ENCODE measurements at regions of chr19 and their contacts with region 1.

Region 1: GRCh38 chr19:6048808-6049405 is 61.4 kb downstream of the RFX2 start:
- DNase-seq: peak; percentile 77 to 87 (median 82)
- H3K4me3 ChIP-seq: peak overlapping the region in 1 of 7 experiments; percentile 39
- H3K27ac ChIP-seq: no peak overlapping the region
- H3K4me1 ChIP-seq: peaks cover 0 to 11% (median 10%) of the 10 kb centered on the region in 4 experiments
- H3K27me3 ChIP-seq: no peaks in the 10 kb centered on the region

Region 2: DNA sequence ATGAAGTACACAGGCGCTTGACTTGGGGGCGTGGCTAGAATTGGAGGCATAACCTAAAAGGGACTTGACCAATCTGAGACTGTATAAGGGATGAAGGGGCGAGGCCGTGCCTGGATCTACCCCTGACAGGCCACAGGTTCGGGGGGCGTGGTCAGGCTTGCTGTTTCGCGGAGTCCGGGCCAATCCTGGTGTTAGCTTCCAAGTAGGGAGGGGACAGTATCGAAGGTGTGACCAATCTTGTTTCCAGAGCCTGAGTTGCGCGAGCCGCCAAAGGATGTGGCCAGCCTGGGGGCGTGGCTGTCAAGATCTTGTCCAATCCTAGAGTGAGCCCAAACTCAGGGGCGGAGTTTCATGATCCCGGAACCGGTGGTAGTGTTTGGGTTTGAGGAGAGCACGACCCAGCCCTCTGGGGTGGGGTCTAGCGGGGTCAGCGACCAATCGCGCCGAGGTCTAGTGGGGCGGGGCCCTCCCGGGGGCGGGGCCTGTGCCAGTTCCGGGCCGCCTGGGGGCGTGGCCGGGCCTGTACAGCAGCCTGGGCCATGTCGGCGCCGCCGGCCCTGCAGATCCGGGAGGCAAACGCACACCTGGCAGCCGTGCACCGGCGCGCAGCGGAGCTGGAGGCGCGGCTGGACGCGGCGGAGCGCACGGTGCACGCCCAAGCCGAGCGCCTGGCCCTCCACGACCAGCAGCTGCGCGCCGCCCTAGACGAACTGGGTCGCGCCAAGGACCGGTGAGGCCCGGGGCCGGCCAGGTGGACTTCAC is 144.4 kb before region 1 on chr19 and contains the start of gene VMAC:
- CTCF ChIA-PET with region 1: no interaction called
- POLR2A ChIA-PET with region 1: no interaction called
- DNase-seq: peak; percentile 100
- H3K4me3 ChIP-seq: peak within 1 kb of the TSS; percentile 84 to 100 (median 97)
- H3K27ac ChIP-seq: peak within 1 kb of the TSS; percentile 94 to 97
- H3K4me1 ChIP-seq: peaks cover 0 to 25% (median 16%) of the 10 kb centered on the region in 4 experiments
- H3K27me3 ChIP-seq: no peaks in the 10 kb centered on the region

Region 3: GRCh38 chr19:6065685-6066374 is 16.9 kb after region 1 on chr19:
- CTCF ChIA-PET with region 1: interaction called, 18 read pairs
- POLR2A ChIA-PET with region 1: interaction called, 6 read pairs
- DNase-seq: peak; percentile 91 to 99 (median 98)
- H3K4me3 ChIP-seq: peak overlapping the region in 4 of 7 experiments; percentile 16 to 51 (median 36)
- H3K27ac ChIP-seq: peak overlapping the region; percentile 98 to 99
- H3K4me1 ChIP-seq: peaks cover 28 to 80% (median 77%) of the 10 kb centered on the region in 4 experiments
- H3K27me3 ChIP-seq: no peaks in the 10 kb centered on the region

Region 4: GRCh38 chr19:6076675-6077463 is 28.0 kb after region 1 on chr19:
- CTCF ChIA-PET with region 1: interaction called, 16 read pairs
- POLR2A ChIA-PET with region 1: no interaction called
- DNase-seq: no peak
- H3K4me3 ChIP-seq: no peak overlapping the region
- H3K27ac ChIP-seq: no peak overlapping the region
- H3K4me1 ChIP-seq: peaks cover 0 to 8% (median 1%) of the 10 kb centered on the region in 4 experiments
- H3K27me3 ChIP-seq: no peaks in the 10 kb centered on the region

Region 5: GRCh38 chr19:6116749-6117430 is 68.0 kb after region 1 on chr19:
- CTCF ChIA-PET with region 1: interaction called, 87 read pairs
- POLR2A ChIA-PET with region 1: no interaction called
- DNase-seq: no peak
- H3K4me3 ChIP-seq: no peak overlapping the region
- H3K27ac ChIP-seq: no peak overlapping the region
- H3K4me1 ChIP-seq: peaks cover 0 to 16% (median 1%) of the 10 kb centered on the region in 4 experiments
- H3K27me3 ChIP-seq: no peaks in the 10 kb centered on the region

Region 6: DNA sequence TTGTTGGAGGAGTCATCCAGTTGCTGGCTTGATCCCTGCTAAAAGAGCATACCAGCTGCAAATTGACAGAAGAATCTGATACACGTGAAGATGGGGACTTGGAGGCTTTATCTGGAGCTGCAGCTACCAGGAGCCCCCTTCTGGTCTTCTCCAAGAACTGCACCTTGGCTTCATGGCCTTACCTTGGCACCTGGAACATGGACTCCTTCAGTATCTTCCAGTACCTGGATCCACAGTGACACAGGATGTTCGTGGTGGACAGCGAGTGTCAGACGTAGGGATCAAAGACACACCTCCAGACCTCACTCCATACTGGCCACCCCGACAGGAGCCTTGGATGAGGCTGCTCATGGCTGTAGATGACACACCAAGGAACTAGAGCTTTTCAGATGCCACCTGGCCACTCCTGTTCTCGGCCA is 76.7 kb after region 1 on chr19:
- CTCF ChIA-PET with region 1: interaction called, 87 read pairs
- POLR2A ChIA-PET with region 1: interaction called, 4 read pairs
- DNase-seq: peak; percentile 72 to 82 (median 80)
- H3K4me3 ChIP-seq: no peak overlapping the region
- H3K27ac ChIP-seq: no peak overlapping the region
- H3K4me1 ChIP-seq: peaks cover 0 to 5% (median 0%) of the 10 kb centered on the region in 4 experiments
- H3K27me3 ChIP-seq: no peaks in the 10 kb centered on the region